Activated CD4-positive, alpha-beta T cell treated with anti-CD3 and anti-CD28 coated beads, Interleukin-2, amount 10 ng/mL, durations not matched to agents 24 days and 14 days (primary cell): ENCODE measurements at regions of chr1 and their contacts with region 1.

Region 1: GRCh38 chr1:10694633-10695627 is 101.5 kb downstream of the CASZ1 start:
- DNase-seq: peak; percentile 93
- H3K4me3 Mint-ChIP-seq: peak overlapping the region; percentile 84
- H3K27ac Mint-ChIP-seq: peak overlapping the region; percentile 77
- H3K4me1 Mint-ChIP-seq: peaks cover 26% of the 10 kb centered on the region
- H3K27me3 Mint-ChIP-seq: peaks cover 23% of the 10 kb centered on the region

Region 2: GRCh38 chr1:10519016-10519417 is 175.9 kb before region 1 on chr1:
- intact Hi-C with region 1: no loop called
- DNase-seq: no peak
- H3K4me3 Mint-ChIP-seq: no peak overlapping the region
- H3K27ac Mint-ChIP-seq: no peak overlapping the region
- H3K4me1 Mint-ChIP-seq: peaks cover 50% of the 10 kb centered on the region
- H3K27me3 Mint-ChIP-seq: no peaks in the 10 kb centered on the region

Region 3: DNA sequence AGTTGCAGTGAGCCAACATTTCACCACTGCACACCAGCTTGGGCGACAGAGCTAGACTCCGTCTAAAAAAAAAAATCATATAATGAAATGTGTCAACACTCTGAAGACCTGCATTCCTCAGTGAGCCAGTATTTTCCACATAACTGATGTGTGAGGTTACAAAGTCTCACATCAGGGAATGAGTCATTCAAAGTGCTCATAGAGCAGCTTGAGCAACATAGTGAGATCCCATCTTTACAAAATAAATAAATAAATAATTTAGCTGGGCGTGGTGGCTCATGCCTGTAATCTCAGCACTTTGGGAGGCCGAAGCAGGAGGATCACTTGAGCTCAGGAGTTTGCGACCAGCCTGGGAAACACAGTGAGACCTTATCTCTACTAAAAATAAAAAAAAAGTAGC is 36.1 kb after region 1 on chr1:
- intact Hi-C with region 1: loop called (anchors 5 kb)
- DNase-seq: no peak
- H3K4me3 Mint-ChIP-seq: no peak overlapping the region
- H3K27ac Mint-ChIP-seq: no peak overlapping the region
- H3K4me1 Mint-ChIP-seq: peaks cover 4% of the 10 kb centered on the region
- H3K27me3 Mint-ChIP-seq: peaks cover 7% of the 10 kb centered on the region

Region 4: DNA sequence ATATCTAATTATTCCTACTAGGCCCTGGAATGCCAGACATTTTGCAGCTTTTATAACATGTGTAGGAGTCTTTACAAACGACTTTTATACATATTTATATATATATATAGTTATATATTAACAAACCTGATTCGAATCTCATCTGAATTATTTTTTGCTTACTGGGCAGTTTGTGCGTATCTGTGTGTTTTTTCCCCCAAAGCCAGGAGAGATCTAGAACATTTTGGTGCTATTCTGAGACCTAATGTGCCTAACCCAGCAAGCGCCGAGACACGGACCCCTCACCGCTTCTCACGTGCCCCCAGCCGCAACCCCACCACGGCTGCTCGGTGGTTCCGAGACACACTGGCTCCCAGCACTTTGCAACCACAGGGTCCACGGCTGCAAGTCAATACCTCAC is 46.8 kb after region 1 on chr1:
- intact Hi-C with region 1: no loop called
- DNase-seq: no peak
- H3K4me3 Mint-ChIP-seq: no peak overlapping the region
- H3K27ac Mint-ChIP-seq: no peak overlapping the region
- H3K4me1 Mint-ChIP-seq: no peaks in the 10 kb centered on the region
- H3K27me3 Mint-ChIP-seq: peaks cover 3% of the 10 kb centered on the region

Region 5: GRCh38 chr1:10867138-10867721 is 172.3 kb after region 1 on chr1:
- intact Hi-C with region 1: loop called (anchors 2 kb)
- DNase-seq: peak; percentile 90
- H3K4me3 Mint-ChIP-seq: peak overlapping the region; percentile 41
- H3K27ac Mint-ChIP-seq: no peak overlapping the region
- H3K4me1 Mint-ChIP-seq: peaks cover 14% of the 10 kb centered on the region
- H3K27me3 Mint-ChIP-seq: peaks cover 65% of the 10 kb centered on the region

Region 6: GRCh38 chr1:10941891-10942541 is 247.1 kb after region 1 on chr1:
- intact Hi-C with region 1: loop called (anchors 5 kb)
- DNase-seq: peak; percentile 90
- H3K4me3 Mint-ChIP-seq: no peak overlapping the region
- H3K27ac Mint-ChIP-seq: no peak overlapping the region
- H3K4me1 Mint-ChIP-seq: peaks cover 29% of the 10 kb centered on the region
- H3K27me3 Mint-ChIP-seq: peaks cover 59% of the 10 kb centered on the region